CD4-positive, alpha-beta memory T cell (primary cell): ENCODE measurements at regions of chr2 and their contacts with region 1.

Region 1: DNA sequence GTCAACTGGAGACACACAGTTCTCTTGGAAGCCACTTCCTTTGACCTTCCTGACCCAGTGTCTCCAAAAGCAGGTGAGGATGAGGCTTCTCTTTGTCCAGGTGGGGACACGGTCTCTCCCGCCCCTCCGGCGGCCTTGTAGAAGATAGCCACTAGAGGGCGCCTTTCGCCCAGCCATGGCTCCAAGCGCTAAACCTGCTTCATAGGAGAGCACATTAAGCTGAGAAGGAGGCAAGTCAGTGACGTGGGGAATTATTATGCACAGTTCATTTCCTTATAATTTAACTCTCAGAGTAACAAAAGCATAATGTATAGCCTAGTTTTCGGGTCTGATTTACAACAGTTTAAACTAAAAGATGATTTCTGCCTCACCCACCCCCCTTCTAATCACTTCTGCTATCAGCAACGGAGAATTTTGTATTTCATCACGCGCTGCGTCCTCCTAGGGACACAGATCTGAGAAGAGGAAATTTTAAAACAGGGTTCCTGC is 208.7 kb downstream of the ICOS start:
- DNase-seq: peak; percentile 68 to 76 (median 74)
- H3K4me3 ChIP-seq: peak overlapping the region; percentile 25 to 40
- H3K4me3 Mint-ChIP-seq: peak overlapping the region; percentile 78 to 90 (median 85)
- H3K27ac ChIP-seq: no peak overlapping the region
- H3K27ac Mint-ChIP-seq: peak overlapping the region in 6 of 7 donors; percentile 20 to 91 (median 56)
- H3K4me1 ChIP-seq: peaks cover 11% of the 10 kb centered on the region
- H3K4me1 Mint-ChIP-seq: peaks cover 0 to 11% (median 9%) of the 10 kb centered on the region in 4 donors
- H3K27me3 ChIP-seq: no peaks in the 10 kb centered on the region
- H3K27me3 Mint-ChIP-seq: peaks cover 3 to 16% of the 10 kb centered on the region in 2 donors

Region 2: DNA sequence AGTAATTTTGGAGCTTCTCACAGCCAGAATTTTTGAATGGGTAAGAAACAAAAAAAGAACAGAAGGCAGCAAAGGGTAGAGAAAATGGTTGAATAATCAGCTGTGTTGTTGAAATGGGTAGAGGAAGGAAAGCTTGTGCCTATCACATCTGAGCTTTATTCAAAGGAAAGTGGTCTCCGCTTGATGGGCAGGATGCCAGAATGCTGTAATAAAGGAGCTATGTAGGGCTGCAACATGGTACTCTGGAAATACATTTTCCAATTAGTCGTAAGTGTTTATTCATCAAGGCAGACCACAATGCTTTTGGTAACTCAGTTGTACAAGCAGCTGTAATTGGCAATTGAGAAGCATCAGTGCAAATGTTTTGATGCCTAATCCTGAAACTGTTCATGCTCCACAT is 11.8 kb before region 1 on chr2:
- CTCF ChIA-PET with region 1: interaction called, 24 read pairs
- POLR2A ChIA-PET with region 1: no interaction called
- intact Hi-C with region 1: no loop called
- DNase-seq: no peak
- H3K4me3 ChIP-seq: no peak overlapping the region
- H3K4me3 Mint-ChIP-seq: no peak overlapping the region
- H3K27ac ChIP-seq: no peak overlapping the region
- H3K27ac Mint-ChIP-seq: no peak overlapping the region
- H3K4me1 ChIP-seq: no peaks in the 10 kb centered on the region
- H3K4me1 Mint-ChIP-seq: no peaks in the 10 kb centered on the region
- H3K27me3 ChIP-seq: no peaks in the 10 kb centered on the region
- H3K27me3 Mint-ChIP-seq: peaks cover 2 to 4% of the 10 kb centered on the region in 2 donors

Region 3: DNA sequence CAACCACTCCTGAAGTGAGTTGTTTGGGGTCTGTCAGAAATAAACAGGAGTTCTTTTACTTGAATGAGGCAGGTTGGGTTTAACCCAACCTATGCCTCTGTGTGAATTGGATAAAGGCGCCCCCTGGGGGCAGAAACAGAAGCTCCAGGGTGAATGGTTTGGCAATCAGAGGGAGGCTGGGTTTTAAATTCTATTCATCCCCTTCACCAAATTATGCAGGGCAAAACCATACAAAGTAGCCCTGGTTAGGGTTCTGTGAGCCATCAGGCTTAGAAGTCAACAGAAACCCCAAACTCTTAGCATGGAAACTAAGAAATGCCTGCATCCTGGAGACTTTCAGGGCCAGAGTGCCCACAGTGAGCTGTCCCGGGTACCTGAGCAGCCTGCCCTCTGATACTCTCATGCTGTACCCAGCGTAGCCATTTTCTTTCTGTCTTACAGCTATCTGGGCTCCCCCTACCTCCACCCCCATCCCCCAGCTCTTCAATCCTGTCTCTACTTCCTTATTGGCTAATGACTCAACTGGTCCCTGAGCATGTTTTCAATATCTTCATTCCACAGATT is 32.8 kb after region 1 on chr2:
- CTCF ChIA-PET with region 1: interaction called, 53 read pairs
- POLR2A ChIA-PET with region 1: no interaction called
- intact Hi-C with region 1: loop called (anchors 1 kb)
- DNase-seq: peak; percentile 55 to 65 (median 63)
- H3K4me3 ChIP-seq: no peak overlapping the region
- H3K4me3 Mint-ChIP-seq: no peak overlapping the region
- H3K27ac ChIP-seq: no peak overlapping the region
- H3K27ac Mint-ChIP-seq: no peak overlapping the region
- H3K4me1 ChIP-seq: no peaks in the 10 kb centered on the region
- H3K4me1 Mint-ChIP-seq: no peaks in the 10 kb centered on the region
- H3K27me3 ChIP-seq: no peaks in the 10 kb centered on the region
- H3K27me3 Mint-ChIP-seq: peaks cover 7 to 10% of the 10 kb centered on the region in 2 donors

Region 4: DNA sequence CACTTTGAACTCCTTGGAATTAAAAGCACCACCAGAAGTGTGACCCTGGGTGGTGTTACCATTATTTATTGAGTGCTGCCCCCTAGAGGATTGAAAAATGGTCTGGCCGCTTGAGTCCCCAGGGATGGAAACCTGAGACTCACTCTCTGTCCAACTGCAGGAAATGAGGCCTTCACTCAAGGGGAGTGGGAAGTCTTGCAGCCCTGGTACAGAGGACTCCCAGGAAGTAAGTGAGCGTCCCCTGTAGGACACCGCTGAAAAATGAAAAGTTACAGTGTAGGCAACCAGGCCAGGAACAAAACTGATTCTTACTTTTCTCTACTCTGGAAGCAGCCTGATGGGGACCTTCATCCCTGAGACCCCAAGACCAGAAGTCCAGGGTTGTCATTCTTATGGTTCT is 1534.8 kb after region 1 on chr2:
- CTCF ChIA-PET with region 1: interaction called, 3 read pairs
- POLR2A ChIA-PET with region 1: no interaction called
- intact Hi-C with region 1: loop called (anchors 1 kb)
- DNase-seq: peak in 4 of 5 donors; percentile 32 to 39 (median 38)
- H3K4me3 ChIP-seq: no peak overlapping the region
- H3K4me3 Mint-ChIP-seq: peak overlapping the region in 4 of 8 donors; percentile 45 to 63 (median 50)
- H3K27ac ChIP-seq: no peak overlapping the region
- H3K27ac Mint-ChIP-seq: no peak overlapping the region
- H3K4me1 ChIP-seq: peaks cover 18% of the 10 kb centered on the region
- H3K4me1 Mint-ChIP-seq: peaks cover 5 to 29% (median 20%) of the 10 kb centered on the region in 4 donors
- H3K27me3 ChIP-seq: peaks cover 22% of the 10 kb centered on the region
- H3K27me3 Mint-ChIP-seq: peaks cover 35 to 36% of the 10 kb centered on the region in 2 donors

Region 5: DNA sequence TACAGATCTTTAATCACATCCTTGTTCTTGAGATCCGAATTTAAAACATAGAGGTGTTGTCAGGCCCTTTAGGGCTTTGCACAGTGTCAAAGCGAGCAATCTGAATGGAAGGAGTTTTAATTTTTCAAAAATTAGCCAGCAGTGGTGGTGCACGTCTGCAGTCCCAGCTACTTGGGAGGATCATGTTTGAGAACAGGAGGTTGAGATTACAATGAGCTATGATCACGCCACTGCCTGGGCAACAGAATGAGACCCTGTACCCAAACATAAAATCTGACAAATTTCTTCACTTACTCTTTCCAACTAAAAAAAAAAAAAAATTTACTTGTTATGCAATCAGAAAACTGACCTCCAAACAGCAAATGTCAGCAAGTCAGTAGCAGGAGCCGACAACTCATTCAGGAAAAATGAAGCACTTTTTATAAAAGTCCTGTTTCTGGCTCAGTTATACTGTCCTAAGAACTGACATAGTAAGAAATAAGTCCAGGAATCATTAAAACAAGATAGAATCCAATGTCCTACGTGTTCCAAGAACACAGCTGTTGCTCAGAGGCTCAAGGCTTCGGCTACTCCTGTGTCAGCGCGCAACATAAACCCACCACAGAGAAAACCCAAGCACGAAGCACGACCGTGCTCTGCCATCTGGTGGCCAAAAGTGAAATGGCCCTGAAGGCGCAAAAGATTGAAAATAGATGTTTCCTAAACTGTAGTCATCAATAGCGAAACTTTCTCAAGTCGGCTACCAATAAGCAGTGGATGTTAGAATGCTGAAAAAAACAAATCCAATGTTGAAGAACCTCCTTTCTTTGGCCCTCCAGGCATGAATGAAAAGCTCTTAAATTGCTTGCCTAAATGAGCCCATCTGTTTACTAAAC is 1802.6 kb after region 1 on chr2:
- CTCF ChIA-PET with region 1: interaction called, 5 read pairs
- POLR2A ChIA-PET with region 1: no interaction called
- intact Hi-C with region 1: loop called (anchors 1 kb)
- DNase-seq: peak in 4 of 5 donors; percentile 18 to 42 (median 33)
- H3K4me3 ChIP-seq: no peak overlapping the region
- H3K4me3 Mint-ChIP-seq: peak overlapping the region in 1 of 8 donors; percentile 23
- H3K27ac ChIP-seq: no peak overlapping the region
- H3K27ac Mint-ChIP-seq: no peak overlapping the region
- H3K4me1 ChIP-seq: no peaks in the 10 kb centered on the region
- H3K4me1 Mint-ChIP-seq: peaks cover 0 to 5% (median 0%) of the 10 kb centered on the region in 4 donors
- H3K27me3 ChIP-seq: no peaks in the 10 kb centered on the region
- H3K27me3 Mint-ChIP-seq: peaks cover 8 to 17% of the 10 kb centered on the region in 2 donors